SK-N-SH (cell line): ENCODE measurements at regions of chr7 and their contacts with region 1.

Region 1: GRCh38 chr7:1225441-1226185 is 7.1 kb upstream of the UNCX start:
- DNase-seq: peak; percentile 95
- H3K4me3 ChIP-seq: no peak overlapping the region; a peak in 1 of 4 replicates
- H3K27ac ChIP-seq: no peak overlapping the region
- H3K4me1 ChIP-seq: peaks cover 0 to 3% of the 10 kb centered on the region in 2 experiments; a peak in 1 of 4 replicates
- H3K27me3 ChIP-seq: peaks cover 94% of the 10 kb centered on the region
- CTCF ChIP-seq: peak; percentile 98
- EP300 ChIP-seq: no peak
- RAD21 ChIP-seq: peak; percentile 72

Region 2: DNA sequence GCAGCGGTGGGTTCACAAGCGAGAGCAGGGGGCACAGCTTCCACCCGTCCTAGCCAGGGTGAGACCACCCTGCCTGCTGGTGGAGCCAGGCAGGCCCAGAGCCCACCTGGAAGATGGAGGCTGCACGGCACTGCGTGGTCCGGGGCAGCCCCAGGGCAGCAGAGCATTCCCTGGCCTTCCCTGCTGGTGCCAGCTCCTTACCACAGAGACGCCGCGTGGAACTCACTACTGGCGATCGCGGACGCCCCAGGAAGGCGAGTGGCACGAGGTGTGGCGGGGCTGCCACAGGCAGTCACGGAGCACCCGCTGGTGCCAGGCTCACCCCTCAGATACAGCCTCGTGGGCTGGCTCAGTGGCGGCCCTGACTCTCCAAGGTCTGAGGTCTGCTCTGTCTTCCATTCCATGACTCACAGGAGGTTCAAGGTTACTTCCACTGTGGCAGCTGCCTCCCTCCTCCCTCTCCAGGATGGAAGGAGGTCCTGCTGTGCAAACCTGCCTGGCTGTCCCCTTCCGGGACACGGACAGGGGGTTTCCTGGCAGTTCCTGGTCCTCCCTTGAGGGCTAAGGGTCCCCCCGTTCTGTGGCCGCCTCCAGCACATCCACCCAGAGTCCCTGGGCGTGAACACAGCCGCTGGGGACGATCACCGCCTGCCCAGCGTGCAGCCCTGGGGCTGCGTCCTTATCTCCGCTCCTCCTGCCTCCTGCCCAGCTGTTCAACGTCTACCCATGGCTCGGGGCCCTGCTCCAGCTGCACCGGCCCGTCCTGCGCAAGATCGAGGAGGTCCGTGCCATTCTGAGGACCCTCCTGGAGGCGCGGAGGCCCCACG is 239.5 kb before region 1 on chr7:
- CTCF ChIA-PET with region 1: no interaction called
- POLR2A ChIA-PET with region 1: no interaction called
- DNase-seq: peak; percentile 70
- H3K4me3 ChIP-seq: no peak overlapping the region
- H3K27ac ChIP-seq: no peak overlapping the region
- H3K4me1 ChIP-seq: peaks cover 0 to 8% of the 10 kb centered on the region in 2 experiments; a peak in 1 of 4 replicates
- H3K27me3 ChIP-seq: no peaks in the 10 kb centered on the region
- CTCF ChIP-seq: no peak
- EP300 ChIP-seq: no peak
- RAD21 ChIP-seq: no peak

Region 3: GRCh38 chr7:1204460-1205140 is 21.0 kb before region 1 on chr7:
- CTCF ChIA-PET with region 1: interaction called, 87 read pairs
- POLR2A ChIA-PET with region 1: interaction called, 3 read pairs
- DNase-seq: no peak
- H3K4me3 ChIP-seq: no peak overlapping the region
- H3K27ac ChIP-seq: no peak overlapping the region
- H3K4me1 ChIP-seq: no peaks in the 10 kb centered on the region
- H3K27me3 ChIP-seq: peaks cover 99% of the 10 kb centered on the region
- CTCF ChIP-seq: no peak
- EP300 ChIP-seq: no peak
- RAD21 ChIP-seq: no peak

Region 4: GRCh38 chr7:1247527-1248059 is 22.0 kb after region 1 on chr7:
- CTCF ChIA-PET with region 1: interaction called, 60 read pairs
- POLR2A ChIA-PET with region 1: no interaction called
- DNase-seq: peak; percentile 76
- H3K4me3 ChIP-seq: no peak overlapping the region
- H3K27ac ChIP-seq: no peak overlapping the region
- H3K4me1 ChIP-seq: no peaks in the 10 kb centered on the region
- H3K27me3 ChIP-seq: peaks cover 95% of the 10 kb centered on the region
- CTCF ChIP-seq: no peak
- EP300 ChIP-seq: no peak
- RAD21 ChIP-seq: no peak

Region 5: GRCh38 chr7:1348096-1348822 is 122.6 kb after region 1 on chr7:
- CTCF ChIA-PET with region 1: interaction called, 10 read pairs
- POLR2A ChIA-PET with region 1: no interaction called
- DNase-seq: peak; percentile 63
- H3K4me3 ChIP-seq: no peak overlapping the region
- H3K27ac ChIP-seq: no peak overlapping the region
- H3K4me1 ChIP-seq: no peaks in the 10 kb centered on the region
- H3K27me3 ChIP-seq: peaks cover 100% of the 10 kb centered on the region
- CTCF ChIP-seq: no peak
- EP300 ChIP-seq: no peak
- RAD21 ChIP-seq: no peak

Region 6: DNA sequence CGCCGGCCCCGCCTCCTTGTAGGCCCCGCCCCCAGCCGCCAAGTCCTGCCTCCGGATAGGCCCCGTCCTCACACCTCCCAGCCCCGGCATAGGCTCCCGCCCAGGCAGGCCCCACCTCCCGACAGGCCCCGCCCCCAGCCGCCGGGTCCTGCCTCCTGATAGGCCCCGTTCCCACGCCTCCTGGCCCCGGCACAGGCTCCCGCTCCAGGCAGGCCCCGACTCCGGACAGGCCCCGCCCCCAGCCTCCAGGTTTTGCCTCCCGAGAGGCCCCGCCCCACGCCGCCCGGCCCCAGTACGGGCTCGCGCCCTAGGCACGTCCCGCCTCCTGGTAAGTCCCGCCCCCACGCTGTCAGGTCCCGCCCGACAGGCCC is 233.9 kb after region 1 on chr7:
- CTCF ChIA-PET with region 1: interaction called, 13 read pairs
- POLR2A ChIA-PET with region 1: no interaction called
- DNase-seq: peak; percentile 100
- H3K4me3 ChIP-seq: peak overlapping the region; percentile 78 to 100
- H3K27ac ChIP-seq: peak overlapping the region in 1 of 2 experiments; percentile 96; a peak in 1 of 4 replicates
- H3K4me1 ChIP-seq: peaks cover 17 to 33% of the 10 kb centered on the region in 2 experiments; a peak in 3 of 4 replicates
- H3K27me3 ChIP-seq: no peaks in the 10 kb centered on the region
- CTCF ChIP-seq: no peak
- EP300 ChIP-seq: no peak
- RAD21 ChIP-seq: no peak